H1 (cell line): ENCODE measurements at regions of chr10 and their contacts with region 1.

Region 1: DNA sequence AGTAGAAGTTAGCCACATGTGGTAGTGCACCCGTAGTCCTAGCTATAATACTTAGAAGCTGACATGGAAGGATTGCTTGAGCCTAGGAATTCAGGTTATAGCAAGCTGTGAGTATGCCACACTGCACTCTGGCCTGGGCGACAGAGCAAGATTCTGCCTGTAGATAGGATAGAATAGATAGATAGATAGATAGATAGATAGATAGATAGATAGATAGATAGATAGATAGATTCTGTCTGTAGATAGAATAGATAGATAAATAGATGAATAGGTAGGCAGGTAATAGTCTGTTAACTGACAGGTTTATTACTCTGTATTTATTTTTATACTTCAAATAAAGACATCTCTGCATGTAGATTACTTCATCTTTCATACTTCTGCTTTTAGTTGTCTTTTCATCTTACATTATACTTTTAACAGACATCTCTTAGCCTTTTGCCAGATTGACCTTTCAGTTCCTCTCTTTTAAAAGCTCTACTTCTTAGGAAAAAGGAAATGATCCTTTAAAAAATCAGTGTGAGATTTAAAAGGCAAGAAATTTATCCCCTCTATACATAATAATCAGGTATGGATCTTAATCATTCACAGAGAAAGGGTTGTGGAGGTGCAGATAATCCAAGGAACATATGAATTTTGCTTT is 31.8 kb downstream of the CCAR1 start:
- DNase-seq: no peak
- H3K4me3 ChIP-seq: no peak overlapping the region
- H3K27ac ChIP-seq: no peak overlapping the region; the same call in 1 of the 2 replicates
- H3K4me1 ChIP-seq: no peaks in the 10 kb centered on the region
- H3K27me3 ChIP-seq: no peaks in the 10 kb centered on the region
- CTCF ChIP-seq: no peak
- EP300 ChIP-seq: no peak
- POLR2A ChIP-seq: no peak
- RAD21 ChIP-seq: no peak

Region 2: DNA sequence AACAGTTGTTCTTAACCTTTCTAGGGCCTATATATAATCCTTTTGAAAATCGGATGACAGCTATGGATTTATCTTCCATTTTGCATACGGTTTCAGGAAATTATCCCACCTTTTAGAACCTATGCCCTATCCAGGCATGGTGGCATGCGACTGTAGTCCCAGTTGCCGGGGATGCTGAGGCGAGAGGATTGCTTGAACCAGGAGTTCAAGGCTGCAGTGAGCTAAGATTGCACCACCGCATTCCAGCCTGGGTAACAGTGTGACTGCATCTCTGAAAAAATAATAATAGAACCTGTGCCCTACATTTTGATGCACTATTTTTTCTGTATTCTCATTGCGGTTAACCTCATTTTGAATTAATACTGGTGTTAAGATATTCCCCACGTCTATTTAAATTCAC is 20.2 kb before region 1 on chr10:
- CTCF ChIA-PET with region 1: no interaction called
- POLR2A ChIA-PET with region 1: interaction called, 22 read pairs
- DNase-seq: no peak
- H3K4me3 ChIP-seq: no peak overlapping the region
- H3K27ac ChIP-seq: no peak overlapping the region
- H3K4me1 ChIP-seq: no peaks in the 10 kb centered on the region; a peak in 1 of 7 replicates
- H3K27me3 ChIP-seq: no peaks in the 10 kb centered on the region
- CTCF ChIP-seq: no peak
- EP300 ChIP-seq: no peak
- POLR2A ChIP-seq: no peak
- RAD21 ChIP-seq: no peak

Region 3: GRCh38 chr10:68742397-68742796 is 10.4 kb before region 1 on chr10:
- CTCF ChIA-PET with region 1: no interaction called
- POLR2A ChIA-PET with region 1: interaction called, 12 read pairs
- DNase-seq: no peak
- H3K4me3 ChIP-seq: no peak overlapping the region
- H3K27ac ChIP-seq: no peak overlapping the region
- H3K4me1 ChIP-seq: no peaks in the 10 kb centered on the region
- H3K27me3 ChIP-seq: no peaks in the 10 kb centered on the region
- CTCF ChIP-seq: no peak
- EP300 ChIP-seq: no peak
- POLR2A ChIP-seq: no peak
- RAD21 ChIP-seq: no peak